ENCODE measurements at regions of chr3 and their contacts with region 1.

Region 1: GRCh38 chr3:13895155-13896105 is 15.6 kb upstream of the WNT7A start:
- DNase-seq: peak; percentile 93
- H3K4me3 ChIP-seq: peak overlapping the region; percentile 41 to 50
- H3K27ac ChIP-seq: peak overlapping the region; percentile 52 to 67
- H3K4me1 ChIP-seq: peaks cover 3% of the 10 kb centered on the region
- H3K27me3 ChIP-seq: no peaks in the 10 kb centered on the region
- CTCF ChIP-seq: no peak
- POLR2A ChIP-seq: peak; percentile 87

Region 2: DNA sequence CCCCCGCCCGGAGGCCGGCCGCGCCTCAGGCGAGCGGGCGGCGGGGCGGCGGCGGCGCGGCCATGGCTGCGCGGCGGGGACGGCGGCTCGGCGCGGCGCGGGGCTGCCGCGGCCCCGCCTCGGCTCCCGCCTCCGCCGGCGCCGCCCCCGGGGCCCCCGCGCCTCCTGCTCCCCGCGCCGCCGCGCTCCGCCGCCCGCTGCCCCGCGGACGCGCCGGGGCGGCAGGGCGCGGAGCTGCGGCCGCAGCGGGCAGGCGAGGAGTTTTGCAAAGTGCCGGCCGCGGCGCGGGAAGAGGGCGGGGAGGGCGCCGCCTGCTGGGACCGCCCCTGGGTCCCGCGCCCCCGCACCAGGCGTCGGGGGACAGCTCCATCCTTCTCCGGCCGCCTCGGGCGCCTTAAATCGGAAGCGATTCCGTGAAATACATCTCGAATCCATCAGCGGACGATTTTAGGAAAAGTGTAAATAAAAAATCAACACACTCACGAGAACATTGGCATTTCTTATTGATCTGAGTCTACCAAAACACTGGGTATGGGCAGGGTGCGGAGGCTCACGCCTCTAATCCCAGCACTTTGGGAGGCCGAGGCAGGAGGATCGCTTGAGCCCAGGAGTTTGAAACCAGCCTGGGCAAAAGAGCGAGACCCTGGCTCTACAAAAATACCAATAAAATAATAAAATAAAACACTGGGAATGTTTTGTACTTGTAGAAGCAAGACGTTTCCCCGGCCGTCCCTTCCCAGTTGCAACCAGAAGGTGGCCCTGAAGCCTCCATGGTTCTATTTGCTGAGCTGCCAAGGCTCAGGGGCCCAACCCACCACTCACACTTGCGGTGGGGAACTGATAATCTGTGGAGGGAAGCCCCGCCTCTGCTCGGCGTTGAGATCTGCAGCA is 612.2 kb before region 1 on chr3:
- intact Hi-C with region 1: no loop called
- DNase-seq: no peak
- H3K4me3 ChIP-seq: peak overlapping the region; percentile 31 to 36
- H3K27ac ChIP-seq: no peak overlapping the region
- H3K4me1 ChIP-seq: no peaks in the 10 kb centered on the region
- H3K27me3 ChIP-seq: no peaks in the 10 kb centered on the region
- CTCF ChIP-seq: peak; percentile 12 to 48 (median 39)
- POLR2A ChIP-seq: no peak

Region 3: GRCh38 chr3:13648060-13649001 is 247.1 kb before region 1 on chr3:
- intact Hi-C with region 1: loop called (anchors 10 kb)
- DNase-seq: peak; percentile 79
- H3K4me3 ChIP-seq: no peak overlapping the region
- H3K27ac ChIP-seq: no peak overlapping the region
- H3K4me1 ChIP-seq: no peaks in the 10 kb centered on the region
- H3K27me3 ChIP-seq: no peaks in the 10 kb centered on the region
- CTCF ChIP-seq: peak; percentile 96 to 98 (median 98)
- POLR2A ChIP-seq: no peak

Region 4: GRCh38 chr3:14124615-14125190 is 229.3 kb after region 1 on chr3 and contains the starts of genes CHCHD4 and TMEM43:
- intact Hi-C with region 1: loop called (anchors 5 kb)
- DNase-seq: peak; percentile 99
- H3K4me3 ChIP-seq: peak within 1 kb of the TSS; percentile 74 to 77
- H3K27ac ChIP-seq: peak within 1 kb of the TSS; percentile 89 to 90
- H3K4me1 ChIP-seq: peaks cover 20% of the 10 kb centered on the region
- H3K27me3 ChIP-seq: no peaks in the 10 kb centered on the region
- CTCF ChIP-seq: peak in 2 of 4 experiments; percentile 27 to 35
- POLR2A ChIP-seq: peak; percentile 85
- total RNA-seq, gene CHCHD4: 12.1 to 14.8 TPM
- total RNA-seq, gene TMEM43: 56.8 to 80.5 TPM

Region 5: DNA sequence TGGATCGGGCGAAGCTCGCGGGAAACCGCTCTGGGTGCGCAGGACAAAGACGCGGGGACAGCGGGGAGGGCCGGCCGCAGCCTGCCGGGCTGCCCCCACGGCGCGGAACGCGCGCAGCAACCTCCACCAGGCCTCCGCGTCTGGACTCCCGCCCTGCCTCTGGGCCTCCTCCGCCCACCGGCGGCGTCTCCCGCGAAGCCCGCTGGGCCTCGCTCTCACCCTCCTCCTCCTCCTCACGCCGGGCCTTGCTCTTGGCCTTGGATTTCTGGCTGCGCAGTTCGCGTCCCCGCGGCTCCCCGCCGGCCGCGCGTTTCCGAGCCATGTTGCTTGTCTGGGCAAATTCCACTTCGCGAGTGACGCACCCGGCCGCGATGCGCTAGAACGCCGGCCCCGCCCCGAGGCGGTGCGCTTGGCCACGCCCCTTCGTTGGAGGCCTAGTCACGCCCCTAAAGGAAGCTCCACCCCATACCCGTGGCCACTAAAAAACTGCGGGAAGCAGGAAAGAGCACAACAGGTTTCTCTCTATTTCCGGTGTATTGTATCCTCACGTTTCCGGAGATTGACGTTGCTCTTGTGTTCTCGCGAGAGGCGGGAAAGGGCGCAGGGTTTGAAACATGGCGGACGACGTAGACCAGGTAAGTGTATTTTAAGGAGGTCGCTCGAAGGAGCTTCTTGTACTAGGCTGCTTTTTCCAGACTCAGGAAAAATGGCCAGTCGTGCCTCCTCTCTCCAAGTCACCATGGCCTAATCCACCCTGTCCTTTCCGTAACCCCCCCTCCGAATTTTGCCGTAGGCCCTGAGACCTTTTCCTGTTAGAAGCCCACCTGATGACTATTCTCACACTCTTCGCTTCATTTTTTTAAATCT is 283.1 kb after region 1 on chr3 and contains the starts of genes LSM3 and XPC:
- intact Hi-C with region 1: loop called (anchors 2 kb)
- DNase-seq: peak; percentile 98
- H3K4me3 ChIP-seq: peak within 1 kb of the TSS; percentile 77 to 93
- H3K27ac ChIP-seq: peak within 1 kb of the TSS; percentile 88 to 95
- H3K4me1 ChIP-seq: peaks cover 8% of the 10 kb centered on the region
- H3K27me3 ChIP-seq: no peaks in the 10 kb centered on the region
- CTCF ChIP-seq: peak in 2 of 4 experiments; percentile 18 to 27
- POLR2A ChIP-seq: peak; percentile 99
- total RNA-seq, gene LSM3: 15.0 to 15.1 TPM
- total RNA-seq, gene XPC: 41.1 to 53.2 TPM

Region 6: DNA sequence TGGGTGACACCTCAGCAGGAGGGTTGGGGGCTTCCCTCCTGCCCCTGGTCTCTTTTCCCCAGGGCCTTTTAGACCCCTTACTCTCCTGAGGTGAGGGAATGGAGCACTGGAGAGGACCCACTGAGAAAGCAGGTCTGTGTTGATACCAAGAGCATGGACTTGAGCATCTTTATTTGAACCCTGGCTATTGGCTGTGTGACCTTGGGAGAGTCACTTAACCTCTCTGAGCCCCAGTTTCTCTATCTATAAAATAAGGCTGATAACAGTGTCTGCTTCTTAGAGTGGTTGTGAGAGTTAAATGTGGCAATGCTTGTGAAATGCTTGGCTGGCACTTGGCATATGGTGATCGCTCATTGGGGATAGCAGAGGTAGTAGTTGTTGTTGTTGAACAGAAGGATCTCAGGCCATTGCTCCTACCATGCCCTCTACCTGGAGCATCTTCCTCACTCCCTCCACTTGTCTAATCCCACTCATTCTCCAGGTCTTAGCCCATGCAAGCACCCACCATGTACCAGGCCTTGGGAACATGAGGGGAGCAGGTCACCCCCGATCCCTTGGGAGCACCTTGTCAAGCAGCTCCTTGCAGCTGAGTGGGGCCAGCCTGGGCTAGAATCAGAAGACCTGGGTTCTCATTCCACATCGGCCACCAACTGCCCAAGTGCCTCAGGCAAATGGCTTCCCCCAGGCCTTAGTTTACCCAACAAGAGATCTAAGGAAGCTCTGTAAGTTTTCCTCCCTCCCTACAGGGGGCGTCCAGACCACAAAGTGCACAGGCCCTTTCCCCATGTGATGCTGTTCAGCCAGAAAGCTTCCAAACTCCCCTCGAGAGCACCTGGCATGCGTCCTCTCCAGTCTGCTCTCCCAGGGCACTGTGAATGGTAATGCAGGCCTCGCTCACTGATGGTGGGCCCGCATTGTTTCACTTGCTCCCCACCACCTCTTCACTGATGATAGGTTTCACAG is 379.9 kb after region 1 on chr3:
- intact Hi-C with region 1: no loop called
- DNase-seq: no peak
- H3K4me3 ChIP-seq: no peak overlapping the region
- H3K27ac ChIP-seq: no peak overlapping the region
- H3K4me1 ChIP-seq: no peaks in the 10 kb centered on the region
- H3K27me3 ChIP-seq: no peaks in the 10 kb centered on the region
- CTCF ChIP-seq: no peak
- POLR2A ChIP-seq: no peak

Region 7: DNA sequence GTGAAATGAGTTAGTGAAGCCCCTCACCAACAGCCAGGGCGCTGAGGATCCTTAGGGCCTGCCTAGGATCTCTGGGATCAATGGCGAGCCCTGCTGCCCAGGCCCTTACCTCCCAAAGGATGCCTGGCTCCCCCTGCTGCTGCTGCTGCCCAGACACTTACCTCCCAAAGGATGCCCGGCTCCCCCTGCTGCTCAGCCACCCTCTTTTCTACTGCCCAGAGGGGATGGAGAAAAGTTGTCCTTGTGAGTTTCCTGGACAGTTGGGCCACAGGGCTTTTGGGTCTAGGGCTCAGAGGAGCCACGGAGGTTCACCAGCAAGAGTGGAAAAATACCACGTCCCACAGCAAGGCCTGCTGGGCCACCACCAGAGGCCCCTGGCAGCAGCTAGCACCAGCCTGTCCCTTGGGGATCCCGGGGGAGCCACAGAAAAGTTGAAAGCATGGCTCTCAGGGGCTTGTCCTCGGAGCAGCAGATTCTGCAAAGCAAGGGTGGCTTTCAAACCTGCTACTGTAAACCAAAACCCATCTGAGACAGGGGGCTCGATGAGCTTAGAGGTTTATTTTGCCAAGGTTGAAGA is 566.4 kb after region 1 on chr3:
- intact Hi-C with region 1: loop called (anchors 10 kb)
- DNase-seq: peak; percentile 30
- H3K4me3 ChIP-seq: no peak overlapping the region
- H3K27ac ChIP-seq: no peak overlapping the region
- H3K4me1 ChIP-seq: no peaks in the 10 kb centered on the region
- H3K27me3 ChIP-seq: no peaks in the 10 kb centered on the region
- CTCF ChIP-seq: peak; percentile 30 to 69 (median 53)
- POLR2A ChIP-seq: no peak

Measured in prostate gland (tissue), 2 donors.